Tibial artery (tissue), 4 donors: ENCODE measurements at regions of chr1 and their contacts with region 1.

Region 1: DNA sequence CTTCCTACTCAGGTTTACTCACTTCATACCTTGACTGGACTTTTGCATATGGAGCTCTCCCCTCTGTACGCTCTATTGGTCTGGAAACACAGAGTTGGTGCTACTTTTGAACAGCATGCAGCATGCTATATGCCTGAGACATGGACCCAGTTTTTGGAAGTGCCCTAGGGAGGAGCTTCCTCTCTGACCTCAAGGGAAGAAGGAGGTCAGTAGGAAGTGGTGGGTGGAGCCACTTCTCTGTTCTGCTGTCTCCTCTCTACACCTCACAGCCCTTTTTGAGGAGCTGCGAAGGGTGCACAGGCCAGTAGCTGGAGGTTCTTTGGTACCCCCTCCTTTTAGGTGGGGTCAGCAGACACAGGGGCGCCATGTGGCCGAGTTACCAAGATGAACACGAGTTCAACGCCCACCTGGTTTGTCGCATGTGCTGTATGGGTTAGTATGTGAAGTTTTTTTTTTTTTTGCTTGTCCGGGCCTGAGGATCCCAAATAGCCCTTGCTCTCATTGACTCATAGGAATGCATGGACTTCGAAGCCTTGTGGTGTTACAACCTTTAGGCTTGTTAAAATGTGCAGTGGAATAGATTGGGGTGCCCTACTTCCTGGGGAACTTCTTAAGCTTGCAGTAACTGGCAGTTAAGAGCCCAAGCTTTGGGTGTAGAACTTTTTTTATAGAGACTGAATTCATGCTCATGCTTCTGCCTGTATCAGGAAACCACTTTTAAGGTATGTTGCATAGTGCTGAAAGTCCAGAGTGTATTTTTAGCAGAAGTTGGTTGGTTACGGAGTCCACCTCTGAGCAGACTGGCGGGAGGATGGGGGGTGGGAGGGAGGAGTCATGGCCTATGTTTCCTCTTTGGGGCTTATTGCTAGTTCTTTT is 10.7 kb downstream of the MACF1 start:
- DNase-seq: no peak
- H3K4me3 ChIP-seq: peak overlapping the region; percentile 7 to 15
- H3K27ac ChIP-seq: peak overlapping the region; percentile 59 to 72
- H3K4me1 ChIP-seq: peaks cover 0 to 95% (median 53%) of the 10 kb centered on the region in 4 donors
- H3K27me3 ChIP-seq: no peaks in the 10 kb centered on the region
- CTCF ChIP-seq: no peak

Region 2: DNA sequence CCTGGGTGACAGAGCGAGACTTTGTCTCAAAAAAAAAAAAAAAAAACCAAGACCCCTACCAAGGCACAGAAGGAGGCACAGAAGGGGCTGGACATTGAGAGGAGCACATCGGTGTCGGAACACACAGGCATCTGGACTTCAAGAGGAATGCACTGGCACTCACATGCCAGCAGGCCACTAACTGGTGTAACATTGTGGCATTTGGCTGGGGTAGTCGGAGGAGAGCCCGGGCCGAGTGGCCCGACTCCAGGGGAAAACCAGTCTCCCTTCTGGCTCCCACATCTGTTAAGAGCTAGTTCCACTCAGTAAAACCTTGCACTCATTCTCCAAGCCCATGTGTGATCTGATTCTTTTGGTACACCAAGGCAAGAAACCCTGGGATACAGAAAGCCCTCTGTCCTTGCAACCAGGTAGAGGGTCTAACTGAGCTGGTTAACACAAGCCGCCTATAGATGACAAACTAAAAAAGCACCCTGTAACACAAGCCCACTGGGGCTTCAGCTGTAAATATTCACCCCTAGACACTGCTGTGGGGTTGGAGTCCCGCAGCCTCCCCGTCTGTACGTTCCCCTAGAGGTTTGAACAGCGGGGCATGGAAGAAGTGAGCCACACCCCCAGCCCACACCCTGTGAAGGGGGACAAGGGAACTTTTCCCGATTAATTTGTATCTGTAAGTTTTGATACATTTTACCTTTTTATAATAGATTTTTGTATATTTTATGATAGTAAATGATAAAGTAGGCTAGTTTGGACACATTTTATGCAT is 241.4 kb before region 1 on chr1:
- intact Hi-C with region 1: no loop called
- DNase-seq: peak in 1 of 2 donors; percentile 66
- H3K4me3 ChIP-seq: no peak overlapping the region
- H3K27ac ChIP-seq: no peak overlapping the region
- H3K4me1 ChIP-seq: peaks cover 0 to 9% (median 3%) of the 10 kb centered on the region in 4 donors
- H3K27me3 ChIP-seq: no peaks in the 10 kb centered on the region
- CTCF ChIP-seq: no peak

Region 3: DNA sequence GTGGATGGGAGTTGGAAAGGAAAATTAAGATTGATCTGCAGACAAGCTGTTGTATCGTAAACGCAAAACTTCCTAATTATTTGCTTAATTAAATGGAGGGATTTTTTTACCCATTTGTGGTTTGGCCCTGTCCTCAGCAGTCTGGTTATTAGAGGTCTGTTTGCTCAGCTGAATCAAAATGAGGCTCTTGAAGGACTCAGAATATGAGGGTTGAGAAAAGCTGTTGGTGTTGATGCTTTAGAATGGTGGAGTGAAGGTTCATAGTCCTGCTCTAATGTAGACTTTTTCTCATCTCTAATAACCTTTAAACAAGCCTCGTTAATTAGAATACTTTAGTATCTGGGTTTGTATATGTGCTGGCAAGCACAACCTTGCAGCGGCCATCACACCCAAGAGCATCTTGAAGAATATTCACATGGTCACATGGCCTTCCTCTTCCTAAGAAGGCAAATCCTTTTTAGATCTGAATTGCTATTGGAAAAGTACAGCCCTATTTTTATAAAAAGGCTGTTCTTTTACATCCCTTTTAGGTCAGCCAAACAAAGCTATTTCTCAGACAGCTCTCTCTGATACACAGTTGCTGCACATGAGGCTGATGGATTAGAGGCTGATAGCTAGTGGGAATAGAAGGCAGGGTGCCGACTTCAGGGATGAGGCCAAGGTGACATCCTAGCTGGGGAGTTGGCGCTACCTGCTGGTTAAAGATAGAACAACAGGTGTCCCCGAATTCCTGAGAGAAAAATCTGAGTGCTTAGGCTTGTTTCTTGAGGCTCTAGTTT is 43.1 kb after region 1 on chr1:
- intact Hi-C with region 1: loop called (anchors 5 kb)
- DNase-seq: peak; percentile 76 to 78
- H3K4me3 ChIP-seq: no peak overlapping the region
- H3K27ac ChIP-seq: peak overlapping the region; percentile 53 to 56
- H3K4me1 ChIP-seq: peaks cover 0 to 65% (median 14%) of the 10 kb centered on the region in 4 donors
- H3K27me3 ChIP-seq: no peaks in the 10 kb centered on the region
- CTCF ChIP-seq: peak; percentile 83 to 91